ENCODE measurements at regions of chr2 and their contacts with region 1.

Region 1: GRCh38 chr2:223822818-223823217 is 14.6 kb downstream of the AP1S3 start:
- DNase-seq: peak; percentile 62
- ATAC-seq: peak; percentile 70
- H3K4me3 ChIP-seq: no peak overlapping the region
- H3K4me3 Mint-ChIP-seq: peak overlapping the region; percentile 1
- H3K27ac ChIP-seq: peak overlapping the region; percentile 2 to 60
- H3K27ac Mint-ChIP-seq: peak overlapping the region; percentile 5
- H3K4me1 ChIP-seq: peaks cover 25 to 44% of the 10 kb centered on the region in 2 donors
- H3K4me1 Mint-ChIP-seq: peaks cover 57% of the 10 kb centered on the region
- H3K27me3 ChIP-seq: no peaks in the 10 kb centered on the region
- H3K27me3 Mint-ChIP-seq: no peaks in the 10 kb centered on the region
- CTCF ChIP-seq: no peak

Region 2: DNA sequence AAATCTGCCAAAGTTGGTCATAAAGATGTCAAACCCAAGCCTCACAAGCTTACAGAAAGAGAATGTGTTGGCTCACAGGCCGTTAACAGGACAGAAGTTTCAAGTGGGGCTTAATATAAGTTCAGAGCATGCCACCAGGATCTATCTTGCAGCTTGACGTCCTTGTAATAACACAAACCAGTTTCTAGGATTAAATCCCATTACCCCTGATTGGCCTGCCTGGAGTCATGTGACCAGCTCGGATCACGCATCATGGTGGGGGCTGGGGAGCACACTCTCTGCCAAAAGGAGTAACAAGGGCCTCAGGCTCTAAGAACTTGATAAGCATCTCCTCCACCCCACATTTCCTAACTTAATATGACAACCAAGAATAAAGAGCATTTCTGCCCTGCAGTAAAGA is 181.7 kb before region 1 on chr2:
- CTCF ChIA-PET with region 1: no interaction called
- POLR2A ChIA-PET with region 1: no interaction called
- intact Hi-C with region 1: no loop called
- DNase-seq: no peak
- ATAC-seq: no peak
- H3K4me3 ChIP-seq: no peak overlapping the region
- H3K4me3 Mint-ChIP-seq: no peak overlapping the region
- H3K27ac ChIP-seq: no peak overlapping the region
- H3K27ac Mint-ChIP-seq: no peak overlapping the region
- H3K4me1 ChIP-seq: no peaks in the 10 kb centered on the region
- H3K4me1 Mint-ChIP-seq: no peaks in the 10 kb centered on the region
- H3K27me3 ChIP-seq: no peaks in the 10 kb centered on the region
- H3K27me3 Mint-ChIP-seq: peaks cover 1% of the 10 kb centered on the region
- CTCF ChIP-seq: no peak

Region 3: DNA sequence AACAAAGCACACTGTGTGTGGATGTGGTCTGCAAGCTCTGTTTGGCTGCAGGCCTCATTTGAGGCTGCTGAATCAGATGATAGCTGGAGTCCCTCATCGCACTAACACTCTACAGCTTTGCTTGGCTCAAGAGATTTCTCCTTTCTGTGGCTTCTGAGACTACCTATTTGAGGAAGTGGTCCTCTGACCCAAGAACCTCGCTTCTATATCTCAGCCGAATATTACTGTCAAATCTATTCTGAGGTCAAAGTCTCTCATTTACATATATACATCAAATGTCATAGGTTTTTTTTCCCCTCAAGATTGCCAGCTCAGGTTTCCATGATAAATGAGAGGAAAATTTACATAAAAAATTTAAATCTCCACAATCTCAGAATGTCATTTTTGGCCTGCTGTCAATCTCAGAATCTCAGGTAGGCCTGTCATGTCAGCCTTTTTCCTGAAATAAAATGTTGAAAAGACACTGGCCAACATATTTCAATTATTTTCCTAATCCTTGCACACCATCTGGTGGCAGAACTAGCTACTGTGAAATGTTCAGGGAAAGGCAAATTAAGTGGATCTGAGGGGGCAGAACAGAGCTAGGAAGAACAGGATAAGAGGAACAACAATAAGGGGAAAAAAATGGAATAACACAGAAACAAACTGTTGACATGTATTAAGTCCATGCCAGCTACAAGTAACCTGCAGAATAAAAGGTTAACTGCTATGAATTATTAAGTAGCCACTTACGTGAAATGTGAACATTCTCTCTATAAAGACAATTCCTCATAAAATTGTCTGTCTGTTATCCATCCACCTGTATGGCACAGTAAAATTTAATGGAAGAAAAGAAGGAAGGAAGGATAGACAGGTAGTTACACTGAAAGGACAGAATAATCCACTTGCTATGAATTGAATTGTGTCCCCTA is 24.8 kb before region 1 on chr2:
- CTCF ChIA-PET with region 1: interaction called, 5 read pairs
- POLR2A ChIA-PET with region 1: no interaction called
- intact Hi-C with region 1: loop called (anchors 2 kb)
- DNase-seq: peak; percentile 57
- ATAC-seq: peak; percentile 74
- H3K4me3 ChIP-seq: no peak overlapping the region
- H3K4me3 Mint-ChIP-seq: peak overlapping the region; percentile 0
- H3K27ac ChIP-seq: peak overlapping the region in 1 of 2 donors; percentile 7
- H3K27ac Mint-ChIP-seq: peak overlapping the region; percentile 56
- H3K4me1 ChIP-seq: peaks cover 14 to 21% of the 10 kb centered on the region in 2 donors
- H3K4me1 Mint-ChIP-seq: peaks cover 49% of the 10 kb centered on the region
- H3K27me3 ChIP-seq: no peaks in the 10 kb centered on the region
- H3K27me3 Mint-ChIP-seq: no peaks in the 10 kb centered on the region
- CTCF ChIP-seq: no peak

Measured in B cell (primary cell).